ENCODE measurements at regions of chr5 and their contacts with region 1.

Region 1: DNA sequence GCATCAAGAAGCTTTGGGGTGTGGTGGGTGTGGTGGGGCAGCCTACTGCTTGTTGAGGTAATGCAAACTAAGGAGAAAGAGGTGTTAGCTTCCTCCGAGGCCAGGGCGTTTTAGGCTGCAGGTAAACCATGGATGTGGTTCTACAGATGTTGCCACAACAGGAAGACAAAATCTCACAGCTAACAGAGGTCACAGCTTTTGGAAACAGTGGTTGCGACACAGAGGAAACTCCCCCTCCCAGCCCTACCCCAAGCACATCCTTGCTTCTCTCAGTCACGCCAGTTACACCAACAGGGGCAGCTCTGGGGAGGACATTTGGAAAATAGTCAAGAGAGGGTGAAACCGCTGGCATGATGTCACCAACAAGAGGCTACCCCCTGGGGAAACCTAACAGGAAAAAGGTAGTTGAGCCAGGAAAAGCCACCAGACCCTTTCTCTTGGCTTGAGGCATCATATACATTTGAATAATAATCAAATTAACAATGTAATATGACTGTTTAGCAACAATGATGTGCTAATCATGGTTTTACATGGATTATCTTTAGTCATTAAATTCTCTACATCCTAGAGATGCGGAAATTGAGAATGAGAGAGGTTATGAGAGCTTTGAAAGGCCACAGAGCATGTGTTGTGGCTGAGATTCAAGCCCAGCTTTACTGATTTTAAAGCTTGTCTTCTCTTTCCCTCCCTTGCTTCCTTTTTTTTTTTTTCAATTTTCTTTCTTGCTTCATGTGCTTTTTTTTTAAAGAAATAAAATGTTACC is 82.2 kb upstream of the IL12B start:
- DNase-seq: peak; percentile 81
- H3K4me3 Mint-ChIP-seq: peak overlapping the region; percentile 47
- H3K27ac Mint-ChIP-seq: peak overlapping the region; percentile 80
- H3K4me1 Mint-ChIP-seq: peaks cover 64% of the 10 kb centered on the region
- H3K27me3 Mint-ChIP-seq: peaks cover 13% of the 10 kb centered on the region

Region 2: DNA sequence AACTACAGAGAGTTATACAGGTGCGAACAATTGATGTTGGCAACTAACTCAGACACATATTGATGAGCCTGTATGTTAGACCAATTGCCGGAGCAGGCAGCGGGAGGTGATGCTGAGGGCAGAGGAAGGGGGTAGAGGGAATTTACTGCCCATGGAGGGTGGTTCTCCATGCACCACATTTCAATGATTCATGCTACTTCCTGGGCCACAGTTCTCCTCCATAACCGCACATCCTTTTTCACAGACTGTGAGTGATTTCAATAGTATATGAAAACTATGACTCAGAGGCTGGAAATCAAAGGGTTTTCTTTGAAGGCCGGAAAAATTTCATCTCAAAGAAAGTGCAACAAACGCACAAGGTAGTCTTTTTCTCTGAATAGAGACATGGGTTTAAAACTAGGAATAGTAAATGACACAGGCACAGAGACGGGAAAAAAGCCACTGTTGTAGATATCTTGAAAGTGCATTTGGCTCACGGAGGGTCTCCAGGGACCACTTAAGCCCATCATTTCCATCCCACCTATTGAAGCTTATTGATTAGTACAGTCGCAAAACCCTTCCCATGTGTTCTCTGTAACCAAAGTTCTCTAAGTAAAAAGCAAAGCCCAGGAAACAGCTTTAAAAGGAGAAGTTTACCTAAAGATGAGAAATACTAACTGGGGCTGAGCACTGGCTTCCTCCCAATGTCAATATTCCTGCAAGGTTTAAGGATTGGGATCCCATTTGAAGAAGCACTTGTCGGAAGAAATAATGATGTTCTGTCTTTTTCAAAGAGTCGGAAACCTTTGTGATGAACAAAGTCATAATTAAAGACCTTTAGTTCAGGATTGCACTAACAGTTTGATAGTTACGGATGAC is 1808.9 kb before region 1 on chr5:
- intact Hi-C with region 1: loop called (anchors 2 kb)
- DNase-seq: peak; percentile 74
- H3K4me3 Mint-ChIP-seq: peak overlapping the region; percentile 59
- H3K27ac Mint-ChIP-seq: peak overlapping the region; percentile 88
- H3K4me1 Mint-ChIP-seq: peaks cover 79% of the 10 kb centered on the region
- H3K27me3 Mint-ChIP-seq: no peaks in the 10 kb centered on the region

Region 3: GRCh38 chr5:158875272-158875679 is 537.2 kb before region 1 on chr5:
- intact Hi-C with region 1: loop called (anchors 1 kb)
- DNase-seq: no peak
- H3K4me3 Mint-ChIP-seq: peak overlapping the region; percentile 9
- H3K27ac Mint-ChIP-seq: peak overlapping the region; percentile 55
- H3K4me1 Mint-ChIP-seq: peaks cover 47% of the 10 kb centered on the region
- H3K27me3 Mint-ChIP-seq: peaks cover 4% of the 10 kb centered on the region

Region 4: DNA sequence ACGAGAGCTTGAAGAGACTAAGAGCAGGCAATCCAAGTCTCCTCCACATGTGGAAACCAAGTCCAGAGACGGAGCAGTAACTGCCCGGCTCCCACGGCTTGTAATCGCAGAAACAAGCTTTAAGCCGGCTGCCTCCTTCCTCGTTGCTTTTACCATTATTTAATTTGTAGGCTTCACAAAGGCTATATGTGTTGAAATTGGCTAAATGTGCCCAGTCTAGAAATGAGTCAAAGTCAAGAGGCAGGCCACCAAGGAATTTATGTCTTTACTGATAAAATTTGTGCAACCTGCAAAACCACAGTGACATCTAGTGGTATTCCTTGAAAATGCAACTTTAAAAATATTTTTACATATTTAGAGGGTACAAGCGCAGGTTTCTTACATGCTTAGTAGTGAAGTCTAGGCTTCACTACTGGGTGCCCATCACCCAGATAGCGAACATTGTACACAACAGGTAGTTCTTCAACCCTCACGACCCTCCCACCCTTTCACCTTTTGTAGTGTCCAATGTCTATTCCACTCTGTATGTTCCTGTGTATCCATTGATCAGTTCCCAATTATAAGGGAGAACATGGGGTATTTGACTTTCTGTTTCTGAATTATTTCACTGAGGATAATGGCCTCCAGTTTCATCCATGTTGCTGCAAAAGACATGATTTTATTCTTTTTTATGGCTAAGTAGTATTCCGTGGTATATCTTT is 279.3 kb before region 1 on chr5:
- intact Hi-C with region 1: no loop called
- DNase-seq: no peak
- H3K4me3 Mint-ChIP-seq: no peak overlapping the region
- H3K27ac Mint-ChIP-seq: no peak overlapping the region
- H3K4me1 Mint-ChIP-seq: no peaks in the 10 kb centered on the region
- H3K27me3 Mint-ChIP-seq: peaks cover 23% of the 10 kb centered on the region

Region 5: DNA sequence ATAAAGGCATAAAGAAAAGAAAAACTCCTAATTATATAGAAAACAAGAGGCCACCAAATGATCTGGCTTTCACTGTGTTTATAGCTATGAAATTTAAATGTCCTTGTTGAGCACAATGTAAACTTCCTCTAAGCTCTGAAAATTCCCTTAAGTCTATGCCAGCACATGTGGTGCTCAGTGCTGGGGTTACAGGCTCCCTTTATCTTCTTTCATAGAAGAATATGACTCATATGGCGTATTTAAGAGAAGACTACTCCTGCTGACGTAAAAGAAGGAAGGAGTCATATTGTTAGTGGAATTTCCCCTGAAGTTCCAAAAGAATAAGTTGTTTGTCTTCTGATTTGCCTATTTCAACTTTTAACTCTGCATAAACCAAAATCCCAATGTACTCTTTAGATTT is 233.5 kb before region 1 on chr5:
- intact Hi-C with region 1: loop called (anchors 2 kb)
- DNase-seq: no peak
- H3K4me3 Mint-ChIP-seq: peak overlapping the region; percentile 66
- H3K27ac Mint-ChIP-seq: peak overlapping the region; percentile 91
- H3K4me1 Mint-ChIP-seq: peaks cover 93% of the 10 kb centered on the region
- H3K27me3 Mint-ChIP-seq: no peaks in the 10 kb centered on the region

Region 6: DNA sequence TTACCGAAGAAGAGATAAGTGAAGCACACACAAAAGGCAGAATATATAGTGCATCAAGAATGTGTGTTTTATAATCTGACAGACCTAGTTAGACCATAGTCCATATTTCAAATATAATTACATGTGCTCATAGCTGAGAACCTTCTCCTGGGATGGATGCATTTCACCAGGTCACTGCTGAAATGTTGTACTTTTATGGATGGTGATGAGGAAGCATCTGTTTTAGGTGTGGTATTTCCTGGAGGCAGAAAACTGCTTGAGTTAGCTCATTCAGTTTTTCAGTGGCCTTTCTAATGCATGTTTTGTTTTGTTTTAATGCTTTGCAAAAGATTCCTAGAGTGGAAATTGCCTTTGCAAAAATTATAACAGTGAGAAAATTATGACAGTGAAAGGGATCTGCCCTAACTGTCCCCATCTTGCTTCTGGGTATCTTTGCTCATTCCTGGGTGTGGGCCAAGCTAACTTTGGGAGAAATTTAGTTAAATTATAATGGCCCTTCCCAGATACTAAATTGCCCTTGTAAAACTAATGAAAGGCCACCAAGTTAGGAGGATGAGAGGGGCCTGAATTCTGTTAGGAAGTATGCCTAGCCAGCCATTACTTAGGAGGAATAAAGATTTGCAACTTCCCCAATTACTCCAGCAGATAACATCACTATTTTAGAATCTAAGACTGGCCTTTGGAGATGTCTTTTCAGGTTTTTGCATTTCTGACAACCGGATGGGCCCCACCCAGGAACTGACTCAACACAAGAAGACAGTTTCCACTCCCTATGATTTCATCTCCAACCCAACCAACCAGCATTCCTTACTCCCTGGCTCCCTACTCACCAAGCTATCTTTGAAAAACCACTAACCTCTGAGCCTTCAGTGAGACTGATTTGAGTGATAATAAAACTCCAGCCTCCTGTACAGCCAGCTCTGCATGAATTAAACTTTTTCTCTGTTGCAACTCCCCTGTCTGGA is 75.2 kb before region 1 on chr5:
- intact Hi-C with region 1: loop called (anchors 1 kb)
- DNase-seq: peak; percentile 66
- H3K4me3 Mint-ChIP-seq: peak overlapping the region; percentile 43
- H3K27ac Mint-ChIP-seq: peak overlapping the region; percentile 50
- H3K4me1 Mint-ChIP-seq: peaks cover 87% of the 10 kb centered on the region
- H3K27me3 Mint-ChIP-seq: no peaks in the 10 kb centered on the region

Region 7: GRCh38 chr5:159386028-159386711 is 26.3 kb before region 1 on chr5:
- intact Hi-C with region 1: no loop called
- DNase-seq: no peak
- H3K4me3 Mint-ChIP-seq: no peak overlapping the region
- H3K27ac Mint-ChIP-seq: no peak overlapping the region
- H3K4me1 Mint-ChIP-seq: no peaks in the 10 kb centered on the region
- H3K27me3 Mint-ChIP-seq: peaks cover 42% of the 10 kb centered on the region

Region 8: GRCh38 chr5:159773062-159773924 is 360.8 kb after region 1 on chr5:
- intact Hi-C with region 1: loop called (anchors 1 kb)
- DNase-seq: peak; percentile 79
- H3K4me3 Mint-ChIP-seq: peak overlapping the region; percentile 49
- H3K27ac Mint-ChIP-seq: peak overlapping the region; percentile 44
- H3K4me1 Mint-ChIP-seq: peaks cover 33% of the 10 kb centered on the region
- H3K27me3 Mint-ChIP-seq: peaks cover 29% of the 10 kb centered on the region